ENCODE measurements at regions of chr12 and their contacts with region 1.

Region 1: DNA sequence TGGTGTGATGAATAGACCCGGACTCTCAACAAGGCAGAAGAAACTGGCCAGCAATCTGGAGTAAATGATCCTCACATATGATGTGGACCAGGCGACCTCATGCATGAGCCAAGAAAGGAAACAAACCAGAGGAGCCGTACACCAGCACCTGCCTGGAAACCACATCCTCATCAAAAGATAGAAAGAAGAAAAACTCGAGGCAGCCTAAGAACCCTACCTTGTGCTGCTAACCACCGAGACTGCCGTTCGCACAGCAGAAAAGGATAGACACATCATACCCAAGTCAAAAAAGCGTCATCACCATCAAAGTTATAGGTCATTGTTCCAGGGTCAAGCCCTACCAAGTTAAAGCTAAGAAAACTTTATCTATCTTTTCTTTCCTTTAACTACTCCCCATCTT is 66.7 kb downstream of the RESF1 start:
- DNase-seq: no peak
- H3K4me3 ChIP-seq: no peak overlapping the region
- H3K27ac ChIP-seq: no peak overlapping the region
- H3K4me1 ChIP-seq: no peaks in the 10 kb centered on the region
- H3K27me3 ChIP-seq: no peaks in the 10 kb centered on the region
- CTCF ChIP-seq: no peak

Region 2: DNA sequence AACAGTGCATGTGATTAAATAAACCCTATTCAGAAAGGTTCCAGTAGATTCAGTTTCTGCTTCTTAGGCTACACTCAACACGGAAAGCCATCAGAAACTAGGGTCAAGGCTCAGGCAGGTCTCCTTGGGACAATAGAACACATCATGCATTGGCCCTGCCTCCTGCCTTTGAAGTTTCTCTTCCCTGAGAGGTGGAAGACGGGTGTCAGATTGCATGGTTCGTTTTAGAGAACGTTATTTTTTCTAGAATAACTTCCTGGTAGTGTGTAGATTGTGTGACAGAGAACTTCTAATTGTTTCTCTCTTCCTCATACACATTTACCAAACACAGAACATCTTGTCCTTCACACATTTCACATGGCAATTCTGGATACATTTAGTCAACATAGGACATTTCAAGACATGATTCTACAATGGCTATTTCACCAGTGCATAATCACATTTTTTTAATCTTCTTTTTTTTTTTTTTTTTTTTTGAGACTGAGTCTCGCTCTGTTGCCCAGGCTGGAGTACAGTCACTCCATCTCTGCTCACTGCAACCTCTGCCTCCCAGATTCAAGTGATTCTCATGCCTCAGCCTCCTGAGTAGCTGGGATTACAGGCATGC is 190.5 kb before region 1 on chr12:
- CTCF ChIA-PET with region 1: no interaction called
- POLR2A ChIA-PET with region 1: no interaction called
- intact Hi-C with region 1: no loop called
- DNase-seq: no peak
- H3K4me3 ChIP-seq: no peak overlapping the region
- H3K27ac ChIP-seq: no peak overlapping the region
- H3K4me1 ChIP-seq: no peaks in the 10 kb centered on the region
- H3K27me3 ChIP-seq: no peaks in the 10 kb centered on the region
- CTCF ChIP-seq: no peak

Region 3: GRCh38 chr12:32005496-32006125 is 20.3 kb before region 1 on chr12:
- CTCF ChIA-PET with region 1: interaction called, 11 read pairs
- POLR2A ChIA-PET with region 1: no interaction called
- intact Hi-C with region 1: no loop called
- DNase-seq: no peak
- H3K4me3 ChIP-seq: no peak overlapping the region
- H3K27ac ChIP-seq: no peak overlapping the region
- H3K4me1 ChIP-seq: no peaks in the 10 kb centered on the region
- H3K27me3 ChIP-seq: no peaks in the 10 kb centered on the region
- CTCF ChIP-seq: no peak

Region 4: GRCh38 chr12:32240831-32241230 is 214.9 kb after region 1 on chr12:
- CTCF ChIA-PET with region 1: no interaction called
- POLR2A ChIA-PET with region 1: no interaction called
- intact Hi-C with region 1: no loop called
- DNase-seq: no peak
- H3K4me3 ChIP-seq: no peak overlapping the region
- H3K27ac ChIP-seq: no peak overlapping the region
- H3K4me1 ChIP-seq: no peaks in the 10 kb centered on the region
- H3K27me3 ChIP-seq: no peaks in the 10 kb centered on the region
- CTCF ChIP-seq: no peak